ENCODE measurements at regions of chr1 and their contacts with region 1.

Region 1: DNA sequence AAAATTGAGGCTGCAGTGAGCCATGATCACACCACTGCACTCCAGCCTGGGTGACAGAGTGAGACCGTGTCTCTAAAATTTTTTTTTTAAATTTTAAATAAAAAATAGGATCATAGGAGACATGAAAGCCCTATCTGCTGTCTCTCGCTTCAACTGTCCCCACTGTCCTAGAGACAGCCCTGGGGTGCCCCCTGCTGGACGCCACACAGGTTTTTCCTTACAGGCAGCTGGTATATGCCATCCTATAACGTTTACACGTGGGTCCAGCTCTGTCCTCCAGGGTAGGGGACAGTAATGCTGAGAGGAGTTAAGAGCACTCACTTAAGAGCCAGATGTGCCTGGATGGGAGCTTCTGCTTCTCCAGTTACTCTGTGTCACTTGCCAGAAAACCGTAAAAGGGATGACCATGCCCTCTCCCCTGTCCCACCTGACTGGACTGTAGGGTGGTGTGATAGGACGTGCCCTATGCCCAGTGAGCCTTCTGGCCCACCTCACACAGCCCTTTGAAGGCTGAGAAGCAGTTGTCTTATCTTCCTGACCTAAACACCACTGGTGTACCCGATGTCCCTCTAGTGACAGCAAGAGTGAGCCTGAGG is 8.5 kb downstream of the FBXO2 start:
- DNase-seq: peak; percentile 82
- H3K4me3 ChIP-seq: no peak overlapping the region
- H3K27ac ChIP-seq: no peak overlapping the region
- H3K4me1 ChIP-seq: peaks cover 10 to 29% (median 24%) of the 10 kb centered on the region in 4 donors
- H3K27me3 ChIP-seq: peaks cover 43% of the 10 kb centered on the region
- CTCF ChIP-seq: peak; percentile 56 to 73 (median 66)
- EP300 ChIP-seq: no peak
- POLR2A ChIP-seq: no peak

Region 2: GRCh38 chr1:9990944-9991343 is 1654.8 kb before region 1 on chr1:
- in situ Hi-C with region 1: no loop called
- intact Hi-C with region 1: no loop called
- DNase-seq: no peak
- H3K4me3 ChIP-seq: no peak overlapping the region
- H3K27ac ChIP-seq: no peak overlapping the region
- H3K4me1 ChIP-seq: no peaks in the 10 kb centered on the region
- H3K27me3 ChIP-seq: peaks cover 15% of the 10 kb centered on the region
- CTCF ChIP-seq: no peak
- EP300 ChIP-seq: no peak
- POLR2A ChIP-seq: no peak

Region 3: DNA sequence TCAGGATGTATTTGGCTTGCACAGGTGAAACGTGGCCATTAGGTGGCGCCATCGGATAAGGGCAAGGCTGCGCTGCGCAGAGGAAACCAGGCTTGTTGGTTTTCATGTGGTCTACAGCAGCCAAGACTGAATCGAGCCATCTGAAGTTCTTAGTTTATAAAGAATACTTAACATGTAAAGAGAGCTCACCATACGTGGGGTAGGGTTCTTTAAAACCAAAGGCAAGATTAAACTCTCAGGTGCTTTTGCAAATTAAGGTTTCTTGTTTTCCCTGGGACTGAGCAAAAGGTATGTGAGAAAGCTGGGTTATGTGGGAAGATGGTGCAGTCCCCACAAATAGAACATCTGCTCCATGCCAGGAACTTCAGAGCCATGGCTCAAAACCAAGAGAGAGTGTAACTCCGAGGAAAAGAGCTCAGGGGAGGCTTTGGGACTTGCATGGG is 608.0 kb before region 1 on chr1:
- in situ Hi-C with region 1: loop called in 2 of 4 experiments (anchors 25 kb)
- intact Hi-C with region 1: loop called (anchors 5 kb)
- DNase-seq: peak; percentile 91
- H3K4me3 ChIP-seq: no peak overlapping the region
- H3K27ac ChIP-seq: no peak overlapping the region
- H3K4me1 ChIP-seq: peaks cover 0 to 9% (median 3%) of the 10 kb centered on the region in 4 donors
- H3K27me3 ChIP-seq: no peaks in the 10 kb centered on the region
- CTCF ChIP-seq: peak; percentile 90 to 96 (median 94)
- EP300 ChIP-seq: no peak
- POLR2A ChIP-seq: no peak

Region 4: DNA sequence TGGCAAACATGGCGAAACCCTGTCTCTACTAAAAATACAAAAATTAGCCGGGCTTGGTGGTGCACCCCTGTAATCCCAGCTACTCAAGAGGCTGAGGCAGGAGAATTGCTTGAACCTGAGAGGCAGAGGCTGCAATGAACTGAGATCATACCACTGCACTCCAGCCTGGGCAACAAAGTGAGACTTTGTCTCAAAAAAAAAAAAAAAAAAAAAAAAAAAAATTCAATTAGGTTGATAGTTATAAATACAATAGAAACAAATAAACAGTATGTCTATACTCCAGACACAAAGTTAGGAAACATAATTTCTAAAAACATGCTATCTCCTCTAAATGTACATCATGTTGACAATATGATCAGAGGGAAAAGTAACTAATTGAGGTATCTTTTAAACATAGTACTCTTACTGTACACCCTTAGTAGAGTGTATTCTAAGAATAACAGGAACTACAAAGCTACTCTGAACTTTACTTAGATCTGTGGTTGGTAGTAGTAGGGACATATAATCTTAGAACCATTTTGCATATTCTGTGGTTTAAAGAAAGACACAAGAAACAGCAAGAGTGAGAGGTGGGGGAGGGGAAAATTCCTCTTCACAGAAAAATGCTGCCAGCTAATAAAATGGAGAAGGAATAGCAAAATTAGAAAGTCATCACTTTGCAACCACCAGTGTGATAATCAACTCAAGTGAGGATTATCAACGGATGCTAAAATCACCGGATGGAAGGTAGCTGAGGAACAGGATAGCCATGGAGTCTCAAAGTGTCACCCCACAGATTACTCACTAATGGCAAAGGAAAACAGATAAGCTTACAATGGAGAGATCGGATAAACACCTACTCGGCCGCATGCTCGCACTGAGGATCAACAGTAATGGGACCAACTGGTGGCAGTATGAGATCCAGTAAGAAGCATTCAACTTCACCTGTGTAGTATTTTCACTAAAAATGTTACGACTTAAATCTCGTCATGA is 418.4 kb before region 1 on chr1:
- in situ Hi-C with region 1: loop called in 3 of 4 experiments (anchors 10 to 25 kb)
- intact Hi-C with region 1: no loop called
- DNase-seq: no peak
- H3K4me3 ChIP-seq: no peak overlapping the region
- H3K27ac ChIP-seq: no peak overlapping the region
- H3K4me1 ChIP-seq: no peaks in the 10 kb centered on the region
- H3K27me3 ChIP-seq: no peaks in the 10 kb centered on the region
- CTCF ChIP-seq: no peak
- EP300 ChIP-seq: no peak
- POLR2A ChIP-seq: no peak

Region 5: DNA sequence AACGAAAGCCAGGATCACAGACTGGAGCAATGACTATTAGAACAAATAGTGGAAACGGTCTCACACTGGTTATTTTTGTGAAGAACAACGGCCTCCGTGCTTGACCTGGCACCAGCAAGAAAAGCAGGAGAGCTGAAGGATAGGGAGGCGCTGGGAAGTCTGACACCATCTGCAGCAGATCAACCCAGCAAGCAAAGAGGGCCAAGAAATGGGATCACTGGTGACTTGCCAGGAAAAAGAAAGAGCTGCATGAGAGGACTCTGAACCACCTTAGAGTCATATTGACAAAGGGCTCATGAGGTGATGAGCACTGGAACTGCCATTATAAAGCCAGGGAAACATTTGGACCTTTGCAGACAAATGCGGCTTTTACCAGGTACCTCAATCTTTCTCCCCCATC is 408.4 kb before region 1 on chr1:
- in situ Hi-C with region 1: loop called (anchors 10 to 25 kb)
- intact Hi-C with region 1: loop called (anchors 5 kb)
- DNase-seq: no peak
- H3K4me3 ChIP-seq: no peak overlapping the region
- H3K27ac ChIP-seq: peak overlapping the region in 1 of 4 donors; percentile 17
- H3K4me1 ChIP-seq: no peaks in the 10 kb centered on the region
- H3K27me3 ChIP-seq: no peaks in the 10 kb centered on the region
- CTCF ChIP-seq: no peak
- EP300 ChIP-seq: no peak
- POLR2A ChIP-seq: no peak

Region 6: DNA sequence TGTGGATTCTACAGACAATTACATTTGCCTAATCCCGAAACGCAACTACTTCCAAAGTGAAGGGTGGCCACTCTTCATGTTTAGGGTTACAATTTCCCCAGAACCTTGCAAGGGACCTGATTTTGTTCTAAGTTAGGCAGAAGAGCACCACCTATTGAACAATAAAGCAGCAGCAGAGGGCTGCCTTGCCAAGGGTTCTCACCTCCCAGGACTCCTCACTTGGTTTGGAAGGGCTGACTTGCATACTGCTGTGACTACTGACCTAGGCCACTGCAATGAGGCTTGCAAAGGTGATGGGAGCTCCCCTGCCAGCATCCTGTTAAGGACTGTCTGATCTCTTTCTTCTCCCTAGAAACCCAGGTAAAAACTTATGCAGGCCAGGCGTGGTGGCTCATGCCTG is 397.6 kb before region 1 on chr1:
- in situ Hi-C with region 1: loop called in 3 of 4 experiments (anchors 10 to 25 kb)
- intact Hi-C with region 1: loop called (anchors 5 kb)
- DNase-seq: no peak
- H3K4me3 ChIP-seq: no peak overlapping the region
- H3K27ac ChIP-seq: no peak overlapping the region
- H3K4me1 ChIP-seq: no peaks in the 10 kb centered on the region
- H3K27me3 ChIP-seq: no peaks in the 10 kb centered on the region
- CTCF ChIP-seq: no peak
- EP300 ChIP-seq: no peak
- POLR2A ChIP-seq: no peak

Region 7: DNA sequence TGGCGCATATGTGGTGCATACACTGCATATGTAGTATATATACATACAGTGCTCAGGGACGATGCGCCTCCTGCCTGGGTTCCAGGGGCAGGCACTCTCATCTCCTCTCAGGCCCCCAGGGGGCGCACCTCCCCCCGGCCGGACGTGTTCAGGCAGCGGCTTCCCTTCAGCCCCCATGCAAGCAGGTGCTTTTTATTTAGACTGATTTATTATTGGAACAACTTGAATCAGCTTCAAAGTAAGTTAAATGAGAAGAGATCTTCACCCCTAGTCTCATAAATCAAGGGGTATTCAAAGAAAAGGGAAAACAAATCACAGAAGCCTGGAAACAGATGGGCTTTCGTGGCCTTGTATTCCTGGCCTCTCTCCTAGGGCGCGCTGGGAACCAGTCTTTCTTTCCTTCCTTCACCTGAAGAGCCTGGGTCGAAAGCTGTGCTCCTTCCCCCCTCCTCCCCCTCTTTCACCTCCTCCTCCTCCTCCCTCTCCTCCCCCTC is 308.1 kb before region 1 on chr1:
- in situ Hi-C with region 1: loop called in 2 of 4 experiments (anchors 25 kb)
- intact Hi-C with region 1: no loop called
- DNase-seq: peak; percentile 40
- H3K4me3 ChIP-seq: no peak overlapping the region
- H3K27ac ChIP-seq: no peak overlapping the region
- H3K4me1 ChIP-seq: peaks cover 0 to 14% (median 9%) of the 10 kb centered on the region in 4 donors
- H3K27me3 ChIP-seq: peaks cover 44% of the 10 kb centered on the region
- CTCF ChIP-seq: peak; percentile 47 to 67 (median 56)
- EP300 ChIP-seq: no peak
- POLR2A ChIP-seq: no peak

Region 8: GRCh38 chr1:11719313-11720032 is 73.7 kb after region 1 on chr1:
- in situ Hi-C with region 1: no loop called
- intact Hi-C with region 1: loop called (anchors 5 kb)
- DNase-seq: peak; percentile 88
- H3K4me3 ChIP-seq: peak overlapping the region; percentile 24 to 43 (median 36)
- H3K27ac ChIP-seq: peak overlapping the region; percentile 54 to 79 (median 72)
- H3K4me1 ChIP-seq: peaks cover 0 to 14% (median 4%) of the 10 kb centered on the region in 4 donors
- H3K27me3 ChIP-seq: peaks cover 3% of the 10 kb centered on the region
- CTCF ChIP-seq: peak; percentile 91 to 98 (median 94)
- EP300 ChIP-seq: no peak
- POLR2A ChIP-seq: no peak

Measured in transverse colon (tissue), 4 donors.